IMR-90 (cell line): ENCODE measurements at regions of chr1 and their contacts with region 1.

Region 1: DNA sequence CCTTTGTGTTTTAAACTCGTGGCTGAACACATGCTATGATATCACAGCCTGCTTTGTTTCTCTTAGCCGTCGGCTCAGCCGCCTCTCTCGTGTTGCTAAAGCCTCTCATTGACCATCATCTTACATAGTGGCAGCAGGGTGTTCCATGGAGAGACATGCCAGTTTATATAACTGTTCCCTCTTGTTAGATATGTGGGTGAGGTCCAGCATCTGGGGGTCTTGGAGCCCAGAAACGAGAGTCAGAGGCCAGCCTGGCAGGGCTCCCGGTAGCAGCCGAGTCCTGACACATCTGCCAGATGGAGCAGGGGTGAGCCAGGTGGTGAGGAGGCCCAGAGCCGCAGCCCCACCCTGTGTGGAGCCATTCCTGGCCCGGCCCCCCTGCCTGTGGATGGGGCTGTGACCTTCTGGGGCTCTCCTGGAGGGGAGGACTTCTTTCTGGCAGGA is 11.9 kb downstream of the PODN start:
- DNase-seq: no peak
- ATAC-seq: no peak
- H3K4me3 ChIP-seq: no peak overlapping the region
- H3K27ac ChIP-seq: no peak overlapping the region
- H3K4me1 ChIP-seq: peaks cover 2% of the 10 kb centered on the region; the same call in 1 of the 2 replicates
- H3K27me3 ChIP-seq: no peaks in the 10 kb centered on the region
- CTCF ChIP-seq: no peak
- POLR2A ChIP-seq: no peak
- RAD21 ChIP-seq: no peak

Region 2: GRCh38 chr1:53057127-53057526 is 16.8 kb before region 1 on chr1:
- CTCF ChIA-PET with region 1: no interaction called
- POLR2A ChIA-PET with region 1: no interaction called
- dilution Hi-C with region 1: no loop called
- in situ Hi-C with region 1: no loop called
- intact Hi-C with region 1: no loop called
- DNase-seq: no peak
- ATAC-seq: no peak
- H3K4me3 ChIP-seq: no peak overlapping the region
- H3K27ac ChIP-seq: no peak overlapping the region
- H3K4me1 ChIP-seq: peaks cover 13% of the 10 kb centered on the region
- H3K27me3 ChIP-seq: no peaks in the 10 kb centered on the region
- CTCF ChIP-seq: no peak
- POLR2A ChIP-seq: no peak
- RAD21 ChIP-seq: no peak

Region 3: GRCh38 chr1:53121319-53122172 is 47.7 kb after region 1 on chr1:
- CTCF ChIA-PET with region 1: no interaction called
- POLR2A ChIA-PET with region 1: no interaction called
- dilution Hi-C with region 1: no loop called
- in situ Hi-C with region 1: loop called (anchors 5 kb)
- intact Hi-C with region 1: no loop called
- DNase-seq: peak; percentile 74
- ATAC-seq: peak; percentile 31; the same call in 1 of the 2 replicates
- H3K4me3 ChIP-seq: no peak overlapping the region
- H3K27ac ChIP-seq: no peak overlapping the region
- H3K4me1 ChIP-seq: peaks cover 39% of the 10 kb centered on the region
- H3K27me3 ChIP-seq: no peaks in the 10 kb centered on the region
- CTCF ChIP-seq: 0 out of 2 replicates have a peak, but pooled peaks have one; percentile 10
- POLR2A ChIP-seq: no peak
- RAD21 ChIP-seq: no peak

Region 4: DNA sequence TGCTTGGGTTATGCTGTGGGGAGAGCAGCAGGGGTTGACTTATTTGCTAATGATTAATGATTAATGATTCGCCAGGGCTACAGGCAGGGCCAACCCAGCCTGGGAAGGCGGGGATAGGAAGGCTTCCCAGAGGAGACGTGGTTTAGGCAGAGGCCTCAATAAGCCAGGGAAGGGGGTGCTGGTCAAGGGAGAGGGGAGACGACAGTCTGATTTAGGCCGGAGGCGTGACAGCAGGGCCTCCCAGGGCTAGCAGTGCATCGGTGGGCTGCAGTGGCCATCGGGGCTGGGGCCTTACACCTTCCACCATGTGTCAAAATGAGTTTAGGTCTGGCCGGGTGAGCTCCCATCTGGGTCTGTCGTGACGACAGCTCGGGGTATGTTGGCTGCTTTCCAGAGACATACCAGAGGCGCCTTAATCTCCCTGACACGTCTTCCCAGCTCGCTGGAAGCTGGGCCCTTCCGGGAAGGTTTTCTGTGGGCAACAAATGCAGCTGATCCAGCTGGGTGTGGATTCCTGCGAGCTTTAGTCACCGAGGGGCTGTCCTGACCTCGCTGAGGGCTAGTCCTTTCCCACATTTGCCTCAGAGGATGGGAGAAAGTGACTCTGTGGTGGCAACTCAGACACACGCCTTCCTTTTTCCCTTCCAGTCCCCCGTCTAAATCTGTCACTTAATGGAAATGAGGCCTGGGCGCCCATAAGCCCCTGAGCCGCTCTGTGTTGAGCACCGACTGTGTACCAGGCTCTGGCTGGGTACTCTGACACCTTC is 72.2 kb after region 1 on chr1:
- CTCF ChIA-PET with region 1: no interaction called
- POLR2A ChIA-PET with region 1: no interaction called
- dilution Hi-C with region 1: no loop called
- in situ Hi-C with region 1: no loop called
- intact Hi-C with region 1: no loop called
- DNase-seq: peak; percentile 100
- ATAC-seq: peak; percentile 92
- H3K4me3 ChIP-seq: no peak overlapping the region
- H3K27ac ChIP-seq: peak overlapping the region; percentile 97
- H3K4me1 ChIP-seq: peaks cover 24% of the 10 kb centered on the region
- H3K27me3 ChIP-seq: no peaks in the 10 kb centered on the region
- CTCF ChIP-seq: no peak
- POLR2A ChIP-seq: peak; percentile 54; the same call in 1 of the 2 replicates
- RAD21 ChIP-seq: peak; percentile 31